Activated naive CD4-positive, alpha-beta T cell treated with anti-CD3 and anti-CD28 coated beads, Interleukin-2, amount 10 ng/mL, durations not matched to agents 7 days and 5 days (primary cell): ENCODE measurements at regions of chr10 and their contacts with region 1.

Region 1: GRCh38 chr10:43683451-43684291 is 35.0 kb upstream of the ZNF32 start:
- DNase-seq: peak; percentile 39
- H3K4me3 Mint-ChIP-seq: no peak overlapping the region
- H3K27ac Mint-ChIP-seq: no peak overlapping the region
- H3K4me1 Mint-ChIP-seq: peaks cover 2% of the 10 kb centered on the region
- H3K27me3 Mint-ChIP-seq: peaks cover 48% of the 10 kb centered on the region

Region 2: DNA sequence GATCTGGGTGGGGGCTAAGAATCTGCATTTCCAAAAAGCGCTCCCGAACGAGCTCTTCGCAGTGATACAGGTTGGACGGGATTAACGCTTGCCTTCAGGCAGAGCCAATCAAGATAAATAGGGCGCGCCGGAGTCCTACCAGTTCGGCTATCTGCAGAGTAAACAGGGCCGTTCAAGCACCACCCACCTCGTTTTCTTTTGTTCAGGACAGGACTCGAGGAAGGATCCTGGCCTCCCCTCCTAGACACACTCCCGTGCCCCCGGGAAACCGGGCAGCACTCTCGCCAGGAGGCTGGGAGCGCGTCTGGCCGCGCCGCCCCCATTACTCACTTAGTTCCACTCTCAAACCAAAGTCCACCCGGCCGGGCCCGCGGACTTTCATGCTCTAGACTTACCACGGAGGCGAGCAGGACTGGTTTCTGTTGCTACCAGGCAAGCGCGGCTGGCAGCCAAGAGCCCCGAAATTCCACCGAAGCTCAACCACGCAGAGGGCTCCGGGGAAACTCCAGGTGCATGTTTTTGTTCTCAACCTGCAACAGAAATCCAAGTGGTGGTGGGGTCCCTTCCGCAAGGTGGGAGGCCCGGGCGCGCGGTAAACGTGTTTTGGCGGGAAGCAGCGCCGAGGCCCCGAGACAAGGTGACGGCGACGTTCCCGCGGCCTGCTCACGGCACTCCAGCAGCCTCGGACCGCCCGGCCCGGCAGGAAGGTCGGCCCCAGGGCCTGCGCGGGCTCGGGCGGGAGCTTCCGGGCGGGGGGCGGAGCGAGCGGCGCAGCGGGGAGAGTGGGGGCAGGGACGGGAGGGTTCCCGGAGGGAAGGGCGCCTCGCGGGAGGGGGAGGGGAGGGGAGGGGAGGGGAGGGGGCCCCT is 287.4 kb before region 1 on chr10:
- CTCF ChIA-PET with region 1: no interaction called
- DNase-seq: peak; percentile 85
- H3K4me3 Mint-ChIP-seq: peak overlapping the region; percentile 90
- H3K27ac Mint-ChIP-seq: peak overlapping the region; percentile 93
- H3K4me1 Mint-ChIP-seq: peaks cover 78% of the 10 kb centered on the region
- H3K27me3 Mint-ChIP-seq: no peaks in the 10 kb centered on the region

Region 3: DNA sequence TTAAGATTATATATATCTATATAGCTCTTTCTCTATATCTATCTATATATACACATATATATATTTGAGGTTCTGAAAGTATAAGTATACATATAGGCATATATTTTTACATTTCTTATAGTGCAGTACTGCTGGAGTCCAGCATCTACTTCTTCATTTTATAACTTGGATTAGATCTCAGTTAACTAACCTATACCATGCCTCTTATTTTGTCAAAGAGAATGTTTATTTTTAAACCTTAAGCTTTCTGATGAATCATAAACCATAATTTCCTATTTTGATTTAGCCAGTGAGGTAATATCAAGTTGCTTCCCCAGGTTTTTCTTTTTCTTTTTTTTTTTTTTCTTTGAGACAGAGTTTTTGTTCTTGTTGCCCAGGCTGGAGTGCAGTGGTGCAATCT is 43.1 kb before region 1 on chr10:
- CTCF ChIA-PET with region 1: no interaction called
- DNase-seq: no peak
- H3K4me3 Mint-ChIP-seq: no peak overlapping the region
- H3K27ac Mint-ChIP-seq: no peak overlapping the region
- H3K4me1 Mint-ChIP-seq: no peaks in the 10 kb centered on the region
- H3K27me3 Mint-ChIP-seq: peaks cover 5% of the 10 kb centered on the region

Region 4: GRCh38 chr10:43671656-43672531 is 11.8 kb before region 1 on chr10:
- CTCF ChIA-PET with region 1: interaction called, 19 read pairs
- DNase-seq: peak; percentile 59
- H3K4me3 Mint-ChIP-seq: no peak overlapping the region
- H3K27ac Mint-ChIP-seq: no peak overlapping the region
- H3K4me1 Mint-ChIP-seq: peaks cover 2% of the 10 kb centered on the region
- H3K27me3 Mint-ChIP-seq: peaks cover 66% of the 10 kb centered on the region

Region 5: GRCh38 chr10:43801133-43801532 is 117.5 kb after region 1 on chr10:
- CTCF ChIA-PET with region 1: no interaction called
- DNase-seq: no peak
- H3K4me3 Mint-ChIP-seq: no peak overlapping the region
- H3K27ac Mint-ChIP-seq: no peak overlapping the region
- H3K4me1 Mint-ChIP-seq: peaks cover 25% of the 10 kb centered on the region
- H3K27me3 Mint-ChIP-seq: peaks cover 18% of the 10 kb centered on the region

Region 6: DNA sequence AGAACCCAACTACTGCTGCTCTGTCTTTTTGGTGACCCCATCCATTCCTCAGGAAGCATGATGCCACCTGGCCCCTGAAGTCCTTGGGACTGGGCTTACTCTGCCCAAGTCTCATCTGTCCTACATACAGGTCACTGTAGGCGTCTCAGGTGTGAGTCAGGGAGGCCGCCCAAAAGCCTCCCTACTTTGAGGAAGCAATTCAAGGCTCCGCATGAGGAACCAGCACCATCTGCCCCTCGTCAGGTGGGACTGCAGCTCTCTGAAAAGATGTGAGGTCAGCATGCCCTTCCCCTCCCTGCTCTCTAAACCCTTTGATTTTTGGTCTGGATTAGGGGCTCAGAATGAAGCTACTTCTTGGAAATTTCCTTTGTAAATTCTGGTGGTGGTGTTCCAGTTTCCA is 346.5 kb after region 1 on chr10:
- CTCF ChIA-PET with region 1: interaction called, 10 read pairs
- DNase-seq: peak; percentile 52
- H3K4me3 Mint-ChIP-seq: no peak overlapping the region
- H3K27ac Mint-ChIP-seq: no peak overlapping the region
- H3K4me1 Mint-ChIP-seq: peaks cover 2% of the 10 kb centered on the region
- H3K27me3 Mint-ChIP-seq: peaks cover 17% of the 10 kb centered on the region